ENCODE measurements at regions of chr1 and their contacts with region 1.

Region 1: DNA sequence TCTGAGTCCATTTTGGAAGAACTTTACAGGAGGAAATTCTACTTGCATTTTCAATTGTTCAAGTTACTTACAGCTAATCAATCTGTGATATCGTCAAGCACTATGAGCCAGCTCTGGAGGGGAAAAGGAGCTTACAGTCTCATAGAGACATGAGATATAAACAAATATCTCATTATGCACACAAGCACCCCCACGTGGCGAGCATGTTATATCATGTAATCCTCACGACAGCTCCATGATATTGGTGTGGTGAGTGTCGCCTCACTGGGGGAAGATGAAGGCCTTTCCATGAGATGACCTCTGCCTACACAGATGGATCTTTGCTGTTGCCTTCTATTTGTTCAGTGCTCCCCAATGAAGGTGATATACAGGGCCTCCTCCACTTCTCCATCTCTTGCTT is 34.6 kb downstream of the TNR start:
- DNase-seq: peak; percentile 68
- H3K4me3 ChIP-seq: no peak overlapping the region
- H3K27ac ChIP-seq: no peak overlapping the region
- H3K4me1 ChIP-seq: no peaks in the 10 kb centered on the region
- CTCF ChIP-seq: peak; percentile 73

Region 2: DNA sequence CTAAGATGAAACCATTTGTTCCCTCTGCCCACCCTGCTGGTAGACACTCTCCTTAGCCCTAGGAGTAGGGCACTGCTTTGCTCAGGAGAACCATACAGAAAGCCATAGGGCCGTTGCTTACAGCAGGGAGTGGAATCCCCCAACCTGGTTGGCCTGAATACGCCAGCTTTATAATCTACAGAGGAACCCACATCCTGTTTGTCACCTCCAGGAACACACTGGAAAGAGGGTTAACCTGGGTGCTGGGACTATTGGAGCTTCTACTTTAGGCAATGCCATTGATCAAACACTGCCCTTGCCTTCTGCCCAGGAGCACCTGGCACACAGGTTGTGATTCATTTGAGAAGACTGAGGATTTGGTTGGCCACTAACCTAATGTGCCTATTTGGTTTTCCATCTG is 90.2 kb before region 1 on chr1:
- CTCF ChIA-PET with region 1: no interaction called
- POLR2A ChIA-PET with region 1: no interaction called
- intact Hi-C with region 1: no loop called
- DNase-seq: no peak
- H3K4me3 ChIP-seq: no peak overlapping the region
- H3K27ac ChIP-seq: no peak overlapping the region
- H3K4me1 ChIP-seq: no peaks in the 10 kb centered on the region
- CTCF ChIP-seq: no peak

Region 3: GRCh38 chr1:175656416-175656815 is 52.4 kb before region 1 on chr1:
- CTCF ChIA-PET with region 1: no interaction called
- POLR2A ChIA-PET with region 1: no interaction called
- intact Hi-C with region 1: loop called (anchors 5 kb)
- DNase-seq: no peak
- H3K4me3 ChIP-seq: no peak overlapping the region
- H3K27ac ChIP-seq: no peak overlapping the region
- H3K4me1 ChIP-seq: no peaks in the 10 kb centered on the region
- CTCF ChIP-seq: no peak

Measured in OCI-LY7 (cell line).